Dorsolateral prefrontal cortex (tissue), 120 donors: ENCODE measurements at regions of chr11 and their contacts with region 1.

Region 1: GRCh38 chr11:134566311-134566710 is 154.3 kb upstream of the B3GAT1 start:
- DNase-seq: peak in 4 of 10 donors; percentile 41 to 68 (median 60)
- H3K4me3 ChIP-seq: no peak overlapping the region
- H3K27ac ChIP-seq: peak overlapping the region in 1 of 59 donors; percentile 13
- H3K27me3 ChIP-seq: no peaks in the 10 kb centered on the region
- CTCF ChIP-seq: peak in 23 of 56 donors; percentile 6 to 63 (median 28)

Region 2: GRCh38 chr11:134380786-134381185 is 185.5 kb before region 1 on chr11:
- intact Hi-C with region 1: no loop called
- DNase-seq: no peak
- H3K4me3 ChIP-seq: no peak overlapping the region
- H3K27ac ChIP-seq: peak overlapping the region in 1 of 59 donors; percentile 5
- H3K27me3 ChIP-seq: no peaks in the 10 kb centered on the region
- CTCF ChIP-seq: no peak

Region 3: DNA sequence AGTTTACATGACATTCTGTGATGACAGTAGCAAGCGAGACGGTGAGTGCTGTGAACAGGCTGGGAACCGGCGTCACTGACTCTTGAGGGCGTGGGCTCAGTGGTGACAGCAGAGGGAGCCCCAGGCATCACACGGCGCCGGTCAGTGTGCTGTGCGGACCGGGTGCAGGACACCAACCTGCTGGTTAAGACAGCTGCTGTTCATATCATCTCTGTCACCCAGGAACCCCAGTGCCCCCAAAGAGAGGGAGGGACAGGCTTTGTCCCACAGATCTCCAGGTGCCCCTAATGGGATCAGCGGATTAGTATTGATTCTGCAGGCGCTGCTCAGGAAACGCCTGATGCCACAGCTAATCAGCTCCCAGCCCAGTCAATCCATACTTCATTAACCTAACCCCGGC is 172.7 kb before region 1 on chr11:
- intact Hi-C with region 1: loop called in 1 of 2 experiments (anchors 5 kb)
- DNase-seq: peak; percentile 19 to 77 (median 72)
- H3K4me3 ChIP-seq: peak overlapping the region in 2 of 59 donors; percentile 2 to 12
- H3K27ac ChIP-seq: peak overlapping the region in 57 of 59 donors; percentile 1 to 98 (median 75)
- H3K27me3 ChIP-seq: no peaks in the 10 kb centered on the region
- CTCF ChIP-seq: peak in 54 of 56 donors; percentile 21 to 80 (median 64)

Region 4: DNA sequence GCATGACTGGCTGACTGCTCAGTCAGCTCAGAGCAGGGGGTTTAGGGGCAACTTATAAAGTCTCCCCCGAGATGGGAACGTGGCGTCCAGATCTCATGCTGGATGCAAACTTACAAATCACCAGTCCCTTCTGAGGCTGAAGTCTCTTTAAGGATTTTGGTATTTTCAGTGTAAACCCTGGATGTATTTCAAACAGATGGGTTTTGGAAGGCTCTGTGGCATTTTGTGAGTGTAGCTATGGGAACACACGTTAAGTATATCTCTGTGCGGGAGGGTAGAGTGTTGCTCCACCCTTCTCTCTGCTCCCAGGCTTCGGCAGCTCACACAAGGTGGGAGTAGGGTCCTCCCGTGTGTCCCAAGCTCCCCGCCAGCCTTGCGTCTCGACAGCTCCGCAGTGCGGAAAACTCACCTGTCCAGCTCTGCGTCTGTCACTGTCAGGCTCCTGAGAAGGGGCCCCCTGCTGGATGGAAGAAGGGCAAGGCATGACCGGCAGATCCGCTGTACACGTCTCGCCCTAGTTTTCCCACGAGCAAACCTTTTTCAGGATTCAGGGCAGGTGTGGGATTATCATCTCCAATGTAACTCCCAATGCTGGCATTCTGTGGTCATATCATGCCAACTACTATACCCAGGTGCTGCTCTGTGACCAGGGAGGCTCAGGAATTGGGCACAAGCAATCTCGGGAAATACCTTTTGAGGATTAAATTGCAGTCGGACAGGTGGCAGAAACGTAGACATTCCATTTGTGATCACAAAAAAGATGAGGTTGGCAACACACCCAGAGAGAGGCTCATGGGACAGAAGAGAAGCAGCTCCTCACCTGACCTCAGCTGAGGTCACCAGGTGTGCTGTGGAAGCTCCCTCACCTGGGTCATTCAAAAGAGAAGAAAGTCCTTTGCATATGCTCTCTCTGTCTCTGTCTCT is 159.7 kb after region 1 on chr11:
- intact Hi-C with region 1: no loop called
- DNase-seq: peak in 2 of 10 donors; percentile 20 to 44
- H3K4me3 ChIP-seq: peak overlapping the region in 2 of 59 donors; percentile 9 to 26
- H3K27ac ChIP-seq: peak overlapping the region in 5 of 59 donors; percentile 6 to 53 (median 47)
- H3K27me3 ChIP-seq: peaks cover 0 to 20% (median 0%) of the 10 kb centered on the region in 45 donors
- CTCF ChIP-seq: peak in 34 of 56 donors; percentile 6 to 46 (median 29)